ENCODE measurements at regions of chr4 and their contacts with region 1.

Region 1: GRCh38 chr4:10013722-10014121 is 7.6 kb downstream of the SLC2A9 start:
- DNase-seq: peak; percentile 66
- ATAC-seq: peak; percentile 63
- H3K4me3 Mint-ChIP-seq: no peak overlapping the region
- H3K27ac Mint-ChIP-seq: no peak overlapping the region
- H3K4me1 Mint-ChIP-seq: peaks cover 42% of the 10 kb centered on the region
- H3K27me3 Mint-ChIP-seq: no peaks in the 10 kb centered on the region

Region 2: GRCh38 chr4:9704551-9705332 is 309.0 kb before region 1 on chr4:
- CTCF ChIA-PET with region 1: interaction called, 42 read pairs
- DNase-seq: no peak
- ATAC-seq: no peak
- H3K4me3 Mint-ChIP-seq: no peak overlapping the region
- H3K27ac Mint-ChIP-seq: no peak overlapping the region
- H3K4me1 Mint-ChIP-seq: peaks cover 20% of the 10 kb centered on the region
- H3K27me3 Mint-ChIP-seq: no peaks in the 10 kb centered on the region

Region 3: DNA sequence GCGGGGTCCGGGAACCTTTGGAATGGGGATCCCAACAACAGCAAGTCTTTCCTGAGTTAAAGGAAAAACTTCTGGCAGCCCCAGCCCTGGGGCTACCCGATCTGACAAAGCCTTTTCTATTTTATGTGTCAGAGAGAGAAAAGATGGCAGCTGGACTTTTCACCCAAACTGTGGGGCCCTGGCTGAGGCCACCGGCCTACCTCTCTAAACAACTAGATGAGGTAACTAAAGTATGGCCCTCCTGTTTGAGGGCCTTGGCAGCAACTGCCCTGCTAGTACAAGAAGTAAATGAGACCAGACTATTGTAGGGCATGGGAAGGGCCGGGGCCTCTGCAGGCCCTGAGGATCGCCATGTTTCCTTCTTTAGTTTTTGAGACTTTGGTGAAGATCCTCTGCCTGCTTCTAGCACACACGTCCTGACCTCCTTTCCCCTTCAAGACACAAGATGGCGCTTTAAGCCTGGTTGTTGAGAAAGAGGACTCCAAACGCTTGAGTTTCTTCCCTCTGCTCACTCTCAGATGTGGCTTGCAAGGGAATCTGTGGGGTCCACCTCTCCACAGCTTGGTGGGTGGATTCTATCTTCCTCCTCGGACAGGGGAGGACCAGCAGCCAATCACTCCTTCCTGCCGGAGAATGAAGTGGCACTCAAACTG is 250.8 kb before region 1 on chr4:
- CTCF ChIA-PET with region 1: interaction called, 93 read pairs
- DNase-seq: peak; percentile 71
- ATAC-seq: peak; percentile 33
- H3K4me3 Mint-ChIP-seq: no peak overlapping the region
- H3K27ac Mint-ChIP-seq: no peak overlapping the region
- H3K4me1 Mint-ChIP-seq: no peaks in the 10 kb centered on the region
- H3K27me3 Mint-ChIP-seq: peaks cover 24% of the 10 kb centered on the region

Region 4: GRCh38 chr4:9898596-9899305 is 115.0 kb before region 1 on chr4:
- CTCF ChIA-PET with region 1: interaction called, 20 read pairs
- DNase-seq: peak; percentile 44
- ATAC-seq: peak; percentile 47
- H3K4me3 Mint-ChIP-seq: no peak overlapping the region
- H3K27ac Mint-ChIP-seq: no peak overlapping the region
- H3K4me1 Mint-ChIP-seq: no peaks in the 10 kb centered on the region
- H3K27me3 Mint-ChIP-seq: peaks cover 38% of the 10 kb centered on the region

Region 5: DNA sequence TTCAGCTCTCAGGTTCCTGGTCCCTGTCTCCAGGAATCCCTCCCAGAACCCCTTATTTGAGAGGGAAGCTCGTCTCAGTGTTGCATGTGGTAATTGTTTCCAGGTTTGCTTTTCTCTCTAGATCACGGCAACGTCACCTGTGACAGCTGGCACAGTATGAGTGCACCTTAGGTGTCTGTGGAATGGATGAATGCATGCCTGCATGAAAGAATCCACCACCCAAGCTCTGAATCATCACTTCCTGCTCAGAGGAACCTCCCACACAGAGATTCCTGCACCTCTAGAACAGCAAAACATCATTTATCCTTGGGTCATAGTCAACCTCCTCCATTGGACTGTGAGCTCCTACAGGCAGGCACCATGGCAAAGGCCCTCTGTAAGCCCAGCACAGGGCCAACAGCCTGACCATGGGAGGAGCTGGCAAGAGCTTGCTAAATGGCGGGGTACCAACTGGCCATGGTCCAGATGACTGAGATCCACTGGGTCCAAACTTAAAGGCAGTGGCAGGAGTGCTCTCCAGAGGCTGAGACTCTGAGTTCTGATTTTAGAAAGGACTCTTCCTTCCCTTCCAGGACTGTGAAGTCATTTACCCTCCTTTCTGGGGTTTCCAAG is 108.6 kb before region 1 on chr4:
- CTCF ChIA-PET with region 1: interaction called, 20 read pairs
- DNase-seq: no peak
- ATAC-seq: peak; percentile 64
- H3K4me3 Mint-ChIP-seq: no peak overlapping the region
- H3K27ac Mint-ChIP-seq: no peak overlapping the region
- H3K4me1 Mint-ChIP-seq: peaks cover 9% of the 10 kb centered on the region
- H3K27me3 Mint-ChIP-seq: peaks cover 13% of the 10 kb centered on the region

Region 6: GRCh38 chr4:10003666-10004065 is 10.1 kb before region 1 on chr4:
- CTCF ChIA-PET with region 1: interaction called, 23 read pairs
- DNase-seq: peak; percentile 82
- ATAC-seq: peak; percentile 81
- H3K4me3 Mint-ChIP-seq: no peak overlapping the region
- H3K27ac Mint-ChIP-seq: peak overlapping the region; percentile 81
- H3K4me1 Mint-ChIP-seq: peaks cover 93% of the 10 kb centered on the region
- H3K27me3 Mint-ChIP-seq: peaks cover 3% of the 10 kb centered on the region

Measured in activated CD8-positive, alpha-beta memory T cell treated with anti-CD3 and anti-CD28 coated beads, Interleukin-2, amount 10 ng/mL, durations not matched to agents 7 days and 5 days (primary cell).